Activated T-helper 1 cell treated with anti-CD3 and anti-CD28 coated beads, Interleukin-12 subunit alpha, Interleukin-12 subunit beta, Interleukin-2, Interleukin-4 antibody, amounts not matched to agents 30 ng/mL and 10 ng/mL and 1 ng/mL, durations not matched to agents 14 hours and 24 hours and 36 hours (primary cell): ENCODE measurements at regions of chr20 and their contacts with region 1.

Region 1: DNA sequence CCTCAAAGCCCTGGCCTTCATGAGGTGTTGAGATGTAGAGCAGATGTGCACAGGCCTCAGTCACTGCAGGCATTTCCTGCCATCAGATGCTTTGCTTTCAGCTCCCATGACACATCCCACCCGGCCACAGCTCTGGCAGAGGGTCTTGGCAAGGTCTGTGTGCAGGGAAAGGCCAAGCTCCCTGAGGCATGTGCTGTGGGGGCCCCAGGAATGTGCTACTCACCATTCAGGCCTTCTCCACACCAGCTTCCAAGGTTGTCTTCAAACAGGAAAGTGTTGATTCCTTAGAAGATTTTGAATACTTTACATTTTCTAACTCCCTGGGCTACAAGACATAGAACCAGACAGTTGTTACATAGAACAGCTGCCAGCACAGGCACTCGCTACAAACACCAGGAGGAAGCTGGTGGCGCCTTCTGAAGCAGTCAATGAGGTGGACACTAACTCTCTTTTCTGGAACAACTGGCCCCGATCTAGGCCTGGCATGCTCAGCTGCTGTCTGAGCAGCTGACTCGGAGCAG is 27.8 kb downstream of the CASS4 start:
- DNase-seq: no peak
- H3K4me3 Mint-ChIP-seq: peak overlapping the region; percentile 64
- H3K27ac Mint-ChIP-seq: peak overlapping the region; percentile 97
- H3K4me1 Mint-ChIP-seq: peaks cover 71% of the 10 kb centered on the region
- H3K27me3 Mint-ChIP-seq: peaks cover 3% of the 10 kb centered on the region

Region 2: DNA sequence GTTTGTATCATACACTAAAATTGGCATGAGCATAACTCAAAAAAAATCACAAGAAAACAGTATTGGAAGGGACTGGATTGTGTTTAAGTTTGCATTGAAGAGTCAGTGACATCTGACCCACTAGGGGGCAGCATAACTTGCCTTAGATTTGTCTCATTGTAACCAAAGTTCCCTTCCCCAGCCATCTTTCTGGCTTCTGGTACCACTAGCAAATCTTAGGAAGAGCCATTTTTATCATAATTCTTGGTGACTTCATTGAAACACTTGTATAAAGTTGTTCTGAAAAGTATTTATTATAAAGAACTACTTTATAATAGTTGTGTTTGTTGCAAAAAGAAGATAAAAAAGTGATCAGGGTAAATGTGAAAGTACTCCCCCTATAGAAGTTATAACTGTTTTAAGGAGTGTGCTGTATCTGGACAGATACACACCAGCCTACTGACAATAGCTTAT is 39.7 kb before region 1 on chr20:
- intact Hi-C with region 1: loop called (anchors 1 kb)
- DNase-seq: peak; percentile 47
- H3K4me3 Mint-ChIP-seq: no peak overlapping the region
- H3K27ac Mint-ChIP-seq: peak overlapping the region; percentile 24
- H3K4me1 Mint-ChIP-seq: peaks cover 28% of the 10 kb centered on the region
- H3K27me3 Mint-ChIP-seq: no peaks in the 10 kb centered on the region

Region 3: GRCh38 chr20:56414842-56415765 is 24.7 kb before region 1 on chr20:
- intact Hi-C with region 1: loop called (anchors 1 kb)
- DNase-seq: no peak
- H3K4me3 Mint-ChIP-seq: peak overlapping the region; percentile 53
- H3K27ac Mint-ChIP-seq: peak overlapping the region; percentile 92
- H3K4me1 Mint-ChIP-seq: peaks cover 69% of the 10 kb centered on the region
- H3K27me3 Mint-ChIP-seq: no peaks in the 10 kb centered on the region

Region 4: GRCh38 chr20:56429502-56429901 is 10.3 kb before region 1 on chr20:
- intact Hi-C with region 1: loop called (anchors 1 kb)
- DNase-seq: no peak
- H3K4me3 Mint-ChIP-seq: peak overlapping the region; percentile 73
- H3K27ac Mint-ChIP-seq: peak overlapping the region; percentile 94
- H3K4me1 Mint-ChIP-seq: peaks cover 59% of the 10 kb centered on the region
- H3K27me3 Mint-ChIP-seq: no peaks in the 10 kb centered on the region

Region 5: DNA sequence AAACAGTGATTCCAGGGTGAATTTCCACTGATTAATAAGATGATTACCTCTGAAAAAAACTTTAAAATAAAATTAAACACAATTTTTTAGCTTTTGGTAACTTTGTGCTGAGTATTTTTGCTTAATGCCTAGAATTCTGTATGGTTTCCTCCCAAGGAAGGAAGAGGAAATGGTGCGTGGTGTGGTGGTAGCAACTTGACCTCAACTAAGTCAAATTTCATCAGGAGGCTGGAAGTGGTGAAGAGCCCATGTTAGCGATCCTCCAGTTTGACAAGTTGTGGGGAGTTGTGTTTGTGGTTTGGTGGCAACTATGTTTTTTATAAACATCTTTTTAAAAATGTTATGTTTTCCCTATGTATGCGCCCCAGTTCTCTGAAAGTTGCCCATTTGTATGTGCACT is 23.6 kb after region 1 on chr20:
- intact Hi-C with region 1: loop called (anchors 1 kb)
- DNase-seq: no peak
- H3K4me3 Mint-ChIP-seq: peak overlapping the region; percentile 45
- H3K27ac Mint-ChIP-seq: peak overlapping the region; percentile 81
- H3K4me1 Mint-ChIP-seq: peaks cover 74% of the 10 kb centered on the region
- H3K27me3 Mint-ChIP-seq: no peaks in the 10 kb centered on the region